Activated CD4-positive, alpha-beta T cell treated with anti-CD3 and anti-CD28 coated beads for 36 hours (primary cell): ENCODE measurements at regions of chr9 and their contacts with region 1.

Region 1: GRCh38 chr9:3467593-3468219 is 58.1 kb downstream of the RFX3 start:
- DNase-seq: peak; percentile 75
- ATAC-seq: peak; percentile 99
- H3K4me3 Mint-ChIP-seq: no peak overlapping the region
- H3K27ac Mint-ChIP-seq: no peak overlapping the region
- H3K4me1 Mint-ChIP-seq: peaks cover 11% of the 10 kb centered on the region
- H3K27me3 Mint-ChIP-seq: no peaks in the 10 kb centered on the region

Region 2: GRCh38 chr9:3455094-3455493 is 12.6 kb before region 1 on chr9:
- CTCF ChIA-PET with region 1: interaction called, 6 read pairs
- POLR2A ChIA-PET with region 1: interaction called, 17 read pairs
- intact Hi-C with region 1: no loop called
- DNase-seq: no peak
- ATAC-seq: no peak
- H3K4me3 Mint-ChIP-seq: no peak overlapping the region
- H3K27ac Mint-ChIP-seq: no peak overlapping the region
- H3K4me1 Mint-ChIP-seq: no peaks in the 10 kb centered on the region
- H3K27me3 Mint-ChIP-seq: no peaks in the 10 kb centered on the region

Region 3: DNA sequence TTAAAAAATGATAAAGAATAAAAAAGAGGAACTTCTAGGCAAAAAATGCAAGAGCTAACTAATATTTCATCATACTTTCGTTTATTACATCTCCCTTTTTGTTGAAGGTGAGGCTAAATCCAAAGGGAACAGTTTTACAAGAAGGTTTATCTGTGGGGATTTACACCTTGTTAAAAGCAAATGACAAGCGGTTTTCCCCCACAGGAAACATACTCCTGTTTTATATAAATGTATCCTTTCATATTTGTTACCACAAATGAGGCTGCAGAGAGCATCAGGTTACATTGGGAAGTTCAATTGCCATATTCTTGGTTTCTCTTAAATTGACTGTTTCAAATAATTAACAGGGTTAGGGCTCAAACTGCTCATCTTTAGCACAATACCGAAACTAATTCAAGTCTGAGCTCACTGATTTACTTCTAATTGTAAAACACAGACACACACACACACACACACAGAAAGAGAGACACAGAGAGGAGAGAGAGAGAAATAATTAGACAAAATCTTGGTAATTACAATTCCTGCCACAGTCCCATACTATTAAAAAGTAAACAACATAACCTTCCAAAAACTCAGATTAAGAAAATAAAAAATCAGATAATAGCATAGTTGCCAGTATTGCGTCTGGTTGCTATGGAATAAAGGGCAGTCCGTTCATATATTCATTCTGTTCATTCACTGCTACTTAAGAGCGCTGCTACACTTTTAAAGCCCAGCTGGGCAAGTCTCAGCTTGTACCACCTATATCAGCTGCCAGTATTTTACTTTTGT is 41.0 kb after region 1 on chr9:
- CTCF ChIA-PET with region 1: no interaction called
- POLR2A ChIA-PET with region 1: no interaction called
- intact Hi-C with region 1: loop called in 1 of 2 experiments (anchors 1 kb)
- DNase-seq: no peak
- ATAC-seq: peak; percentile 48
- H3K4me3 Mint-ChIP-seq: peak overlapping the region; percentile 41
- H3K27ac Mint-ChIP-seq: peak overlapping the region; percentile 86
- H3K4me1 Mint-ChIP-seq: peaks cover 51% of the 10 kb centered on the region
- H3K27me3 Mint-ChIP-seq: no peaks in the 10 kb centered on the region

Region 4: GRCh38 chr9:3647652-3648051 is 179.9 kb after region 1 on chr9:
- CTCF ChIA-PET with region 1: no interaction called
- POLR2A ChIA-PET with region 1: no interaction called
- intact Hi-C with region 1: loop called in 1 of 2 experiments (anchors 5 kb)
- DNase-seq: no peak
- ATAC-seq: no peak
- H3K4me3 Mint-ChIP-seq: no peak overlapping the region
- H3K27ac Mint-ChIP-seq: no peak overlapping the region
- H3K4me1 Mint-ChIP-seq: peaks cover 10% of the 10 kb centered on the region
- H3K27me3 Mint-ChIP-seq: no peaks in the 10 kb centered on the region

Region 5: DNA sequence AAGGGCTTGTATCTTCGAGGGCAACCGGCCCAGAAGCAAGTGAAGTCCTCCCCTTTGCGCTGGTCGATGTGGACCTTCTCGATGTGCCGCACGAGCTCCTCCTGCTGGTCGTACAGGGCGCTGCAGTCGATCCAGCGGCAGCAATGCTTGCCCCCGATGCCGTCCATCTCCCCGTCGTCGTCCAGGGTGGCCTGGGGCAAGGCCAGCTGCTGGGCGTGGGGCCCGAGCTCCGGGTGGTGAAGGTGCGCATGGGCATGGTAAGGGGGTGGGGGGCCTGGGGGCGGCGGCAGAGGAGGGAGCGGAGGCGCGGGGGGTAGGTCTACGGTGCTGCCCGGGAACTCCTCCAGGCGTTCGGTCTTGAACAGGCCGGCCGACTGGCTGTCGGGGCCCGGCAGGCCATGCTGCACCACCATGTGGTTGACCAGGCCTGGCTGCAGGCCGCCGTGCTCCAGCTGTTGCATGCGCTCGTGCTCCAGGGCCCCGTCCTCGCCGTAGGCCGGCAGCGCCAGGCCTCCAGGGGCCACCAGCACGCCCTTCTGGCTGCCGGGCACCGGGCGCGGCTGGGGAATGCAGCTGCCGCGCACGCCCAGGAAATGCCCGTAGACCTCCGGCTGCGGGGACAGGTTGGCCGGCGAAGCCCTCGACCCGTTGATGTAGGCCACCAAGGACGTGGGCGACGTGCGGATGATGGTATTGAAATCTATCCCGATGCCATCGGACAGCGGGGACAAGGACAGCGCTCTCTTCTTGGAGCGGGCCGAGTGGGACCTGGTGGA is 650.3 kb after region 1 on chr9:
- CTCF ChIA-PET with region 1: interaction called, 4 read pairs
- POLR2A ChIA-PET with region 1: no interaction called
- intact Hi-C with region 1: loop called (anchors 5 kb)
- DNase-seq: peak; percentile 74
- ATAC-seq: peak; percentile 70
- H3K4me3 Mint-ChIP-seq: no peak overlapping the region
- H3K27ac Mint-ChIP-seq: no peak overlapping the region
- H3K4me1 Mint-ChIP-seq: no peaks in the 10 kb centered on the region
- H3K27me3 Mint-ChIP-seq: no peaks in the 10 kb centered on the region